Posterior cingulate gyrus (tissue), 11 donors: ENCODE measurements at regions of chr14 and their contacts with region 1.

Region 1: GRCh38 chr14:61252369-61253063 is 28.6 kb downstream of the TMEM30B start:
- DNase-seq: peak; percentile 26 to 94 (median 68)

Region 2: GRCh38 chr14:60622917-60623257 is 629.6 kb before region 1 on chr14:
- intact Hi-C with region 1: loop called (anchors 1 kb)
- DNase-seq: no peak

Region 3: DNA sequence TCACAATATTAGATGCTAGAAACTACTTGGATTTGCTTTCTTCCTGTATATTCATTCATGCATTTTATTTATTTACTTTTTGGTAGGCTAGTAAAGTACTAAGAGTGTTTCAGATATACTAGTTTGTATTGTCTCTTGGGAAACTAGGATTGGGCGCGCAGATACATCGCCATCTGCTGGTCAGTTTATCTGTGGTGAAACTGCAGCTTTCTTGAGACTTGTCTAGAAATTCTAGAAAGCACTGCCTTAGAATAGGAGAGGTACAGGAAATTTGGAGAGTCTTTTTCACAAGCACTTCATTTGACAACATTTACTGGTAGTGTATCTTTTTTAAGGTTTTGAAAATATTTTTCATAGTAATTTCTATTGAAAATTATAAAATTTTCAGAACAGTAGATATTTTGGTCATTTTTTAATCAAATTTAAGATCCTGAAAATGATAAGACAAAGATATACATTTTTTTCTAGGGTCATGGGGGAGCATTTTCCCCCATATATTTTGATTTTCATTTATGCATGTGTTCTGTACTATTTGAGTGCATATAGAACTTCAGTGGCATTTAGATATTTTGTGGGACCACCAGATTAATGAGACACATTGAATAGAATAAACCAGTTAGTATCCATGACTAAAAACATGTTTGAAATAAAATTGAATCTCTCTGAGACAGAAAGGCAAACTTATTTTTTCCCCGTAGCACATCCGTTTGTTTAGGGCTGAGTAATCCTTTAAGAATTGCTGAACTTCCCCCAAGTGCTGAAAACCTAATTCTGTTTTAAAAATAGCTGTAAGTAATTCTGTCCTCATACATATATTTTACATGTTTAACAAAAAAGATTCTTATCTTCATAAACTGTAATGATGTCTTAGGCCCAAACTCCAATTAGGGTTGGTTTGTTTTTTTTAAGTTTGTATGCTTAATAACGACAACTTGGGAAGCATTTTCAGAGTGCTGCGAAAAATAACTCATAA is 227.0 kb before region 1 on chr14:
- intact Hi-C with region 1: loop called (anchors 10 kb)
- DNase-seq: peak; percentile 11 to 92 (median 56)

Region 4: DNA sequence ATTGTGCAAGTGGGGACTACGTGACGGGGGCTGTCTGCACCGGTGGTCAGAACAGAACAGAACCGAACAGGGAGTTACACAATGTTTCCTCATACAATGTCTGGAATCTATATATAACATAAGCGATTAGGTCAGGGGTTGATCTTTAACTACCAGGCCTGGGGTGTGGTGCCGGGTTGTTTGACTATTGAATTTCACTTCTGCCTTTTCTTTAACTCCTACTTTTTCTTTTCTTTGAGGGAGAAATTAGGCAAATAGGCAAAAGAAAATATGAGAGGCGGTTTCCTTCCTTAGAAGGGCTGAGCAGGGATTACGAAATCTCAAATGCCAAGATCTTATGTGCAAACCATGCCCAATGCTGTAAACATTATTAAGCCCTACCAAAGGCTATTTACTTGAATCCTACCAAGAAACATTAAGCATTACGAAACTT is 131.1 kb before region 1 on chr14:
- intact Hi-C with region 1: no loop called
- DNase-seq: no peak